A549 (cell line): ENCODE measurements at regions of chr10 and their contacts with region 1.

Region 1: DNA sequence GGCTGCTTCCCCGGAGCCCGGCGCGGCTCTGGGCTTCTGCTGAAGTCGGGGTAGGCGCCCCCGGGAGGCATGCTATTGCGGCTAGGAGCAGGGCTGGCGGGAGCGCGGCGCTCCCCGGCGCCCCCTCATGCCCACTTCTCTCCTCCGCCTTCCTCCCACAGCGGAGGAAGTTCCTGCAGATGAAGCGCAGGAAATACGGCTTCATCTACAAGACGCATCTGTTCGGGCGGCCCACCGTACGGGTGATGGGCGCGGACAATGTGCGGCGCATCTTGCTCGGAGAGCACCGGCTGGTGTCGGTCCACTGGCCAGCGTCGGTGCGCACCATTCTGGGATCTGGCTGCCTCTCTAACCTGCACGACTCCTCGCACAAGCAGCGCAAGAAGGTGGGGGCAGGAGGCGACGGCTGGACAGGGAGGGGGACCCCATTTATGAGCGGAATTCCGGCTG is 479 bp downstream of the CYP26A1 start:
- DNase-seq: peak; percentile 61 to 71
- ATAC-seq: peak; percentile 77 to 81
- H3K4me3 ChIP-seq: peak overlapping the region; percentile 61
- H3K27ac ChIP-seq: peak overlapping the region; percentile 57 to 86
- H3K4me1 ChIP-seq: peaks cover 22% of the 10 kb centered on the region; the same call in 2 of the 3 replicates
- CTCF ChIP-seq: peak; percentile 59
- EP300 ChIP-seq: no peak
- POLR2A ChIP-seq: no peak
- RAD21 ChIP-seq: peak; percentile 29 to 54; a peak in 4 of 5 replicates

Region 2: GRCh38 chr10:92965314-92965713 is 108.9 kb before region 1 on chr10:
- CTCF ChIA-PET with region 1: interaction called, 12 read pairs
- POLR2A ChIA-PET with region 1: no interaction called
- DNase-seq: peak; percentile 15 to 63
- ATAC-seq: no peak
- H3K4me3 ChIP-seq: no peak overlapping the region
- H3K27ac ChIP-seq: no peak overlapping the region
- H3K4me1 ChIP-seq: peaks cover 3% of the 10 kb centered on the region; the same call in 1 of the 3 replicates
- CTCF ChIP-seq: peak; percentile 83
- EP300 ChIP-seq: no peak
- POLR2A ChIP-seq: no peak
- RAD21 ChIP-seq: peak; percentile 68 to 71

Region 3: GRCh38 chr10:93062514-93063143 is 11.5 kb before region 1 on chr10:
- CTCF ChIA-PET with region 1: interaction called, 17 read pairs
- POLR2A ChIA-PET with region 1: interaction called, 3 read pairs
- DNase-seq: peak in 1 of 2 experiments; percentile 38
- ATAC-seq: peak; percentile 40 to 84; a peak in 4 of 6 replicates
- H3K4me3 ChIP-seq: no peak overlapping the region
- H3K27ac ChIP-seq: no peak overlapping the region
- H3K4me1 ChIP-seq: no peaks in the 10 kb centered on the region
- CTCF ChIP-seq: peak; percentile 44
- EP300 ChIP-seq: no peak
- POLR2A ChIP-seq: no peak
- RAD21 ChIP-seq: no peak